ENCODE measurements at regions of chr10 and their contacts with region 1.

Region 1: GRCh38 chr10:96229568-96230030 is 41.8 kb downstream of the BLNK start:
- DNase-seq: peak; percentile 69 to 86 (median 70)
- ATAC-seq: peak; percentile 44 to 73 (median 65)
- H3K4me3 ChIP-seq: no peak overlapping the region
- H3K27ac ChIP-seq: no peak overlapping the region
- H3K4me1 ChIP-seq: peaks cover 0 to 7% (median 0%) of the 10 kb centered on the region in 12 donors
- H3K27me3 ChIP-seq: peaks cover 0 to 9% (median 0%) of the 10 kb centered on the region in 9 donors
- CTCF ChIP-seq: peak; percentile 28 to 76 (median 60)
- POLR2A ChIP-seq: no peak

Region 2: GRCh38 chr10:96287392-96288105 is 58.0 kb after region 1 on chr10:
- intact Hi-C with region 1: loop called in 5 of 10 experiments (anchors 2 to 5 kb)
- DNase-seq: no peak
- ATAC-seq: no peak
- H3K4me3 ChIP-seq: no peak overlapping the region
- H3K27ac ChIP-seq: peak overlapping the region in 1 of 12 donors; percentile 12
- H3K4me1 ChIP-seq: peaks cover 0 to 12% (median 0%) of the 10 kb centered on the region in 12 donors
- H3K27me3 ChIP-seq: peaks cover 0 to 46% (median 0%) of the 10 kb centered on the region in 9 donors
- CTCF ChIP-seq: no peak
- POLR2A ChIP-seq: no peak

Region 3: DNA sequence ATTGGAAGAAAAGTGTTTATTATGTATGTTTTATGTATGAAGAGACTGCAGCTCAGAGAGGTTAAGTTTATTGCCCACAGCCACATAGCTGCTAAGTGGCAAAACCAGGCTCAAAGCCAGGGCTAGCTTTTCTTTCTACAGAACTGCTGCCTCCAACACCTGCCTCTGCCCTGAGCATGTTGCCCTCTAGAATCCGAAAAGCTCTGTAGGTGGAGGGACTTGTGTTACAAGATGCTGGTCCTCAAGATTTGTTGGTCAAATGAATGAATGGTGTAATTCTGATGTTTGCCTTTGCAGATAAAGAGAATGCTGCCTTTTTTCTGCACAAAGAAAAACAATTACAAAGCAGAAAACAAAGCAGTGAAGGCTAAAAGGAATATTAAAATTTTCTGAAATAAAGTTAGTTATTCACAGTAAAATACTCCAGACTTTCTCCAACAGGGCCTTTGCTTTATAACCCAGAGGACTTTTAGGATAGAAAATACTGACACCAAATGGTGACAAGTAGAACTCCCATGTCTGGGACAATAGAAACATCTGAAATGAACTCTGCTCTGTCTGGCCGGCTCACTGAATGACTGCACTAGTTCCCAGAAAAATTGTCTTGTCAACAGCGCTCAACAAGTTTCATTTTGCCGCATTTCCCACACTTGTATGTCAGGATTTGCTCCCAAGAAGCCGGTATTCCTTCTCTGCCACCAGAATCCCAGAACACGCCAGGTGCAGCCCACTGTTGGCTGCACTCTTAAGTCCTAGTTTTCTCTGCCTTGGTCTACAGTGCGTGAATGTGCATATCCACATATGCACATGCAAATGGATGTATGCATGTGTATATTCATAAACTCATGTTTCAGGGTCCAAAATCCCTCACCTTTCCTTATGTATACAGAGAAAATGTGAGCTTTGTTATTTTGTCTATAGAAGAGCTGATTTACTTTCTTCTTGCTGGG is 63.6 kb after region 1 on chr10:
- intact Hi-C with region 1: loop called (anchors 1 to 5 kb)
- DNase-seq: no peak
- ATAC-seq: peak; percentile 66 to 83 (median 77)
- H3K4me3 ChIP-seq: no peak overlapping the region
- H3K27ac ChIP-seq: no peak overlapping the region
- H3K4me1 ChIP-seq: peaks cover 0 to 5% (median 0%) of the 10 kb centered on the region in 12 donors
- H3K27me3 ChIP-seq: peaks cover 0 to 40% (median 3%) of the 10 kb centered on the region in 9 donors
- CTCF ChIP-seq: peak; percentile 33 to 72 (median 58)
- POLR2A ChIP-seq: no peak

Region 4: DNA sequence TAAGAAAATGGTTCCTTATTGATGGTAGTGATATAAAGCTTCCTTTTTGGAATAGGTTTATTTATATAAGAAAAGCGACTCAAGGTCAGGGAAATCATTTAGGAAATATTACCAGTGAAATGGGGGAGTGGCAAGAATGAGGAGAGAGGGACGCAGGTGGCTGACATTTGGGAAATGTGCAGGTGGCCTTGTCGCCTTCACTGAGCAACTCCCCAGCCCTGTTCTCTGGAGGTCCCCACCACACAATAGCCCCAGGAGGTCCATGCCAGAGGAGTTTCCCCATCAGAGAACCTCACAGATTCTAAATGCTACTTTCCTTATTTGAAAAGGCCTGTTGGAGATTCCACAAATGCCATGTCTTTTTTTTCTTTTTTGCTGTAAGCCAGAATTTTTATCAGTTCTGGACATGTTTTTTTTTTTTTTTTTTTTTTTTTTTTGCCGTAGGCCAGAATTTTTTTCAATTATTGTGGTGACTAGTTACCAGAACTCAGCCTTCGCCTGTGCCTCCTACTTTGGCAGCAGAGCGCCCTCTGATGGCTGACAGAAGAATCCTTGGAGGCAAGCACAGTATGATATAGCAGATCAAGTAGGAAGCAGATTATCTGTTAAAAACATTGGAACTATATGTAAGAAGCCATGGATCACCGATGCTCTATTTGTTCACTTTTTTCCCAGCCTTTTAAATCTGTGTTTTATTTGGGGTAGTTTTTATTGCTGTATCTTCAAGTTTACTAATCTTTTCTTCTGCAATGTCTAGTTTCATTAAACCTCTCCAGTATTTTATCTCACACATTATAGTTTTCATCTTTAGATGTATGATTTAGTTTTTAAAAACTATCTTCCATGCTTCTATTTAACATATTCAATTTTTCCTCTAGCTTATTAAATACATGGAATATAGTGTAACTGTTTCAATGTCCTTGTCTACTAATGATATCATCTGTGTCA is 110.6 kb after region 1 on chr10:
- intact Hi-C with region 1: loop called in 1 of 10 experiments (anchors 5 kb)
- DNase-seq: peak in 4 of 5 donors; percentile 19 to 61 (median 44)
- ATAC-seq: peak in 2 of 4 donors; percentile 65 to 78
- H3K4me3 ChIP-seq: no peak overlapping the region
- H3K27ac ChIP-seq: no peak overlapping the region
- H3K4me1 ChIP-seq: peaks cover 0 to 3% (median 0%) of the 10 kb centered on the region in 12 donors
- H3K27me3 ChIP-seq: peaks cover 0 to under 1% (median 0%) of the 10 kb centered on the region in 9 donors
- CTCF ChIP-seq: peak; percentile 49 to 73 (median 62)
- POLR2A ChIP-seq: no peak